Activated naive CD4-positive, alpha-beta T cell treated with anti-CD3 and anti-CD28 coated beads for 36 hours (primary cell): ENCODE measurements at regions of chr11 and their contacts with region 1.

Region 1: GRCh38 chr11:117426269-117426685 is 98.6 kb downstream of the CEP164 start:
- DNase-seq: peak; percentile 84
- H3K4me3 Mint-ChIP-seq: no peak overlapping the region
- H3K27ac Mint-ChIP-seq: no peak overlapping the region
- H3K4me1 Mint-ChIP-seq: no peaks in the 10 kb centered on the region
- H3K27me3 Mint-ChIP-seq: peaks cover 4% of the 10 kb centered on the region

Region 2: GRCh38 chr11:117361432-117361831 is 64.8 kb before region 1 on chr11:
- CTCF ChIA-PET with region 1: no interaction called
- intact Hi-C with region 1: no loop called
- DNase-seq: no peak
- H3K4me3 Mint-ChIP-seq: no peak overlapping the region
- H3K27ac Mint-ChIP-seq: no peak overlapping the region
- H3K4me1 Mint-ChIP-seq: no peaks in the 10 kb centered on the region
- H3K27me3 Mint-ChIP-seq: no peaks in the 10 kb centered on the region

Region 3: DNA sequence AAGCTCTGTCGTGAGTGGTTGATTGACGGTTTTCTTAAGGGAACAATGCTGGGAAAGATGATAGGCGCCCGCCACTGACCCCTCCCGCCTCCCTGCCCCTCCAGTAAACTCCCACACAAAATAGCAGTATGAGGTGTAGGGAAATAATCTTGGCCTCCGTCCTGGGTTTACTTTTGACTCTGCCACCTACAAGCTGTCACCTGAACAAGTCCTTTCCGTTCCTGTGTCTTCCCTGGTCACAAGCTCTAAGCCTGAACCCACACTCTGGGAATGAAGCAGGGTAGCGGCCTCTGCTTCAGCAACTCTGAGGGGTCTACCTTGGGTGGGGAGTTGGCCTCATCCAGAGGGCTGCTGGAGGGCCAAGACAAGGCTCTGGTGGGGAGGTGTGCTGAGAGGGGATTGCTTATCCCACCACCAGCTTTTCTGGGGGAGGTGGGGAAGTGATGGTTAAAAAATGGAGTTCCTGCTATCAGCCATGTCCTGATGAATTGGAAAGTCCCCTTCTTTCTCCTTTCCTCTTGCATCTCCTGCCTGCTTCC is 10.8 kb before region 1 on chr11:
- CTCF ChIA-PET with region 1: interaction called, 26 read pairs
- intact Hi-C with region 1: no loop called
- DNase-seq: no peak
- H3K4me3 Mint-ChIP-seq: no peak overlapping the region
- H3K27ac Mint-ChIP-seq: no peak overlapping the region
- H3K4me1 Mint-ChIP-seq: no peaks in the 10 kb centered on the region
- H3K27me3 Mint-ChIP-seq: no peaks in the 10 kb centered on the region

Region 4: DNA sequence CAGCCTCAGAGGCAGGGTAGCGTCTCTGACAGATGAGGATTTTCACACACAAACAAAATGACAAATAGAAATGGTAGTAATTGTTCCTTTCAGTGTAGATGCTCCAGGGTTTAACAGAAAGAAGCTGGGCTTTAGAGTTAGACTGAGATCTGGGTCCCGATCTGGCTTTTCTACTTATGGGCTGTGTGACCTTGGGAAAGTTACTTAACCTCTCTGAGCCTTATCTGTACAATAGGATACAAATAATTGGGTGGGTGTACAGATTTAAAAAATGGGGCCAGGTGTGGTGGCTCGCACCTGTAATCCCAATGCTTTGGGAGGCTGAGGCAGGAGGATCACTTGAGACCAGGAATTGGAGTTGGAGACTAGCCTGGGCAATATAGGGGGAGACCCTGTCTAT is 106.3 kb after region 1 on chr11:
- CTCF ChIA-PET with region 1: no interaction called
- intact Hi-C with region 1: no loop called
- DNase-seq: no peak
- H3K4me3 Mint-ChIP-seq: no peak overlapping the region
- H3K27ac Mint-ChIP-seq: no peak overlapping the region
- H3K4me1 Mint-ChIP-seq: no peaks in the 10 kb centered on the region
- H3K27me3 Mint-ChIP-seq: peaks cover 19% of the 10 kb centered on the region

Region 5: DNA sequence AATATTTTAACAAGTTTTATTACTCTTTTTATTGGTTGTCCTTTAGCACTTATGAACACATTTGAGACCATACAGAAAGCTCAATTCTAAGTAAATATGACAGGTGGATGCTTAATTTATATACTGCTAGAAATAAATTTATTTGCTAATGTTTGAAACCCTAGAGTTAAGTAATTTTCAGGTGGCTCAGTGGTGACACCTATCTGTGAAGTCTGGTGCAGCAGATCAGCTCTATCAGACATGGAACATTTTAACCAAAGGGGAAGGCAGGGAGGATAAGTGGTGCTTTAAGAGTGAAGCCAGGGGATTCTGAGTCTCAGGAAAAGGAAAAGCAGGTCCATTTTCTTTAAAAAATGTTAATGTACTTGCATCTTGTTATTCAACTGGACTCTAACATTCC is 194.9 kb after region 1 on chr11:
- CTCF ChIA-PET with region 1: interaction called, 52 read pairs
- intact Hi-C with region 1: loop called (anchors 5 kb)
- DNase-seq: peak; percentile 42
- H3K4me3 Mint-ChIP-seq: no peak overlapping the region
- H3K27ac Mint-ChIP-seq: no peak overlapping the region
- H3K4me1 Mint-ChIP-seq: no peaks in the 10 kb centered on the region
- H3K27me3 Mint-ChIP-seq: peaks cover 5% of the 10 kb centered on the region

Region 6: GRCh38 chr11:117817368-117818040 is 391.2 kb after region 1 on chr11:
- CTCF ChIA-PET with region 1: interaction called, 21 read pairs
- intact Hi-C with region 1: loop called (anchors 1 kb)
- DNase-seq: peak; percentile 98
- H3K4me3 Mint-ChIP-seq: peak overlapping the region; percentile 56
- H3K27ac Mint-ChIP-seq: peak overlapping the region; percentile 95
- H3K4me1 Mint-ChIP-seq: peaks cover 65% of the 10 kb centered on the region
- H3K27me3 Mint-ChIP-seq: no peaks in the 10 kb centered on the region